Activated naive CD4-positive, alpha-beta T cell treated with anti-CD3 and anti-CD28 coated beads for 36 hours (primary cell): ENCODE measurements at regions of chr6 and their contacts with region 1.

Region 1: DNA sequence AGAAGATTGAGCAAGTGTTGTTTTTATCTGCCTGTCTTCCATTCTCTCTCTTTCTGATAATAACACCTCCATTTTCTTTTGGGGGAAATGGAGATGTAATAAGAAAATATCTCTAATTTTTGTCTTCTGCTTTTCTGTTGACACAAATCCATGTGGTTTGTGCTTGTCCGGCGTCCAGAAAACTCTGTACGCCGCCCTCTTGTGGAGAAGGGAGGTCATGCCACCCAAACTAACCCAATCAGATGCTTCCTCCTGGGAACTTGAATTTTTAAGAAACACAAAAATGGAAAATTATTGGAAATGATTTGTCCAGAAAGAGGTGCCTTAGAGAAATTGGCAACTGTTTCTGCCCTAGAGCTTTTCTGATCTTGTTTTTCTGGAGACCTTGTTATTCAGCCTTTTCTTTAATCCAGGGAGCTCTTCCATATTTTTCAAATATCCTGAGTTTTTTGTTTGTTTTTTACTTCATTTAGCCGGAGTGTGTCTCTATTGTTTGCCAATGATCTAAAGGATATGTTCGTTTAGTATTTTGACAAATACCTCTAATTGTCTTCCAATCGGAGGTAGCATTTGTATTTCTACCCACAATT is 17.8 kb upstream of the FNDC1 start:
- DNase-seq: peak; percentile 69
- H3K4me3 Mint-ChIP-seq: no peak overlapping the region
- H3K27ac Mint-ChIP-seq: no peak overlapping the region
- H3K4me1 Mint-ChIP-seq: peaks cover 2% of the 10 kb centered on the region
- H3K27me3 Mint-ChIP-seq: peaks cover 2% of the 10 kb centered on the region

Region 2: GRCh38 chr6:158826801-158827573 is 324.4 kb before region 1 on chr6:
- CTCF ChIA-PET with region 1: no interaction called
- intact Hi-C with region 1: no loop called
- DNase-seq: no peak
- H3K4me3 Mint-ChIP-seq: no peak overlapping the region
- H3K27ac Mint-ChIP-seq: peak overlapping the region; percentile 26
- H3K4me1 Mint-ChIP-seq: peaks cover 17% of the 10 kb centered on the region
- H3K27me3 Mint-ChIP-seq: no peaks in the 10 kb centered on the region

Region 3: GRCh38 chr6:159008656-159009288 is 142.6 kb before region 1 on chr6:
- CTCF ChIA-PET with region 1: interaction called, 3 read pairs
- intact Hi-C with region 1: loop called (anchors 1 kb)
- DNase-seq: no peak
- H3K4me3 Mint-ChIP-seq: no peak overlapping the region
- H3K27ac Mint-ChIP-seq: no peak overlapping the region
- H3K4me1 Mint-ChIP-seq: peaks cover 29% of the 10 kb centered on the region
- H3K27me3 Mint-ChIP-seq: no peaks in the 10 kb centered on the region

Region 4: GRCh38 chr6:159056003-159056402 is 95.4 kb before region 1 on chr6:
- CTCF ChIA-PET with region 1: no interaction called
- intact Hi-C with region 1: no loop called
- DNase-seq: peak; percentile 41
- H3K4me3 Mint-ChIP-seq: peak overlapping the region; percentile 22
- H3K27ac Mint-ChIP-seq: peak overlapping the region; percentile 91
- H3K4me1 Mint-ChIP-seq: peaks cover 60% of the 10 kb centered on the region
- H3K27me3 Mint-ChIP-seq: no peaks in the 10 kb centered on the region

Region 5: GRCh38 chr6:159267165-159267564 is 115.8 kb after region 1 on chr6:
- CTCF ChIA-PET with region 1: no interaction called
- intact Hi-C with region 1: no loop called
- DNase-seq: peak; percentile 49
- H3K4me3 Mint-ChIP-seq: no peak overlapping the region
- H3K27ac Mint-ChIP-seq: no peak overlapping the region
- H3K4me1 Mint-ChIP-seq: no peaks in the 10 kb centered on the region
- H3K27me3 Mint-ChIP-seq: peaks cover 8% of the 10 kb centered on the region